CD4-positive, alpha-beta T cell (primary cell): ENCODE measurements at regions of chr3 and their contacts with region 1.

Region 1: DNA sequence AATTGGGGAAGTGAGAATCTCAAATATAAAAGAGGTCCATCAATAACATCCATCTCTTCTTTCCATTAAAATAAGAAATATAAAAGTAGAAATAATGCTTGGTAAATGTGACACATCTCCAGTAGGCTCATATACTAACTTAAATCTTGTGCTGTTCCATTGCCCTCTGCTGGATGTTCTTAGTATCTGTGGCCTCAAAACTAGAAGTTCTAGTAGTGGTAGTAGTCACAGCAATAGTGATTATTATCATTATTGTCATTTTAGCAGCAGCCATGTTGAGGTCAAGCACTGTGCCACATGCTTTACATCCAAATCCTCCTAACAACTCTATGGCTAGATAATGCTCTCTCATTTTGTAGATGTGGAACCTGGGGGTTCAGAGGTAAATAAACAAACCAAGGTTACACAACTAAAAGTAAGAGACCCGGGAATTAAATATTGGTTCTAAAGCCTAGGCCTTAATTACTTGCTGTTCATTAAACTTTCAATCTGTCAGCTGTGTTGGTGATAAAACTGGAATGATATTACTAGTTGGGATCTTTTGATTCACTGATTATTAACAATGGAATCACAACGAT is 20.2 kb upstream of the BTLA start:
- DNase-seq: peak in 5 of 14 experiments; percentile 26 to 81 (median 75)
- ATAC-seq: peak; percentile 97
- H3K4me3 ChIP-seq: no peak overlapping the region
- H3K4me3 Mint-ChIP-seq: no peak overlapping the region
- H3K27ac ChIP-seq: no peak overlapping the region
- H3K27ac Mint-ChIP-seq: no peak overlapping the region
- H3K4me1 ChIP-seq: no peaks in the 10 kb centered on the region
- H3K4me1 Mint-ChIP-seq: peaks cover 20% of the 10 kb centered on the region
- H3K27me3 ChIP-seq: no peaks in the 10 kb centered on the region
- H3K27me3 Mint-ChIP-seq: no peaks in the 10 kb centered on the region
- CTCF ChIP-seq: peak; percentile 74

Region 2: DNA sequence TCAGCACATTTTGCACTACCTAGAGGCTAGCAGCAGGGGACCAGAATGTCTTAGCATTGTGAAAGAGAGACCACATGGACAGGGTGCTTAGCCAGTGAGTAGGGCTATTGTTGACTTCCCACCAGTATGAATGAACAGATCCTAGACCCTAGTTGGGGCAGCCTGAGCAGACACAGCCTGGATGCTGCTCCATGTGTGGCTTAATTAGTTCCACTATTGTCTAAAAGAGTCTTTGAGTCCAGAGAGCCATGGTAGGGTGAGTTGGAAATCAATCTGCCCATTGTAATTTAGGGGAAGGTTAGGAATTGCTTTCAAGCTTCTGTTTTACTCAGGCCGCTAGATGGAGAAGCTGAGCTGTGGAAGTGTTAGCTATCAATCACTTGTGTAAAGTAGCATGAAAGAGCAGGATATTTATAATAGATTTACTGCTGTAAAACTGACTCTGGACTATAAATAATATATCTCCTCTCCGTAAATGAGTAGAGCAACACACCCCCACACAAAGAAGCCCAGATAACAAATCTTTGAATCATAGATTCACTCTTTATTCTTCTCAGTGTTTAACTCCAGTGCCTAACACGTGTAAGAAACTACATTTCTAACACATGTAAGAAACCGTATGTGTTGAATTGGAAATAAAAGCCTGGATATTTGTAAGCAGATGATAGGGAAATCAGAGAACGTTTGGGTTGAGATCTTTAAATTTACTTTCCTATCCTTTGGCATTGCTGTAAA is 382.4 kb before region 1 on chr3:
- CTCF ChIA-PET with region 1: interaction called, 6 read pairs
- POLR2A ChIA-PET with region 1: no interaction called
- intact Hi-C with region 1: loop called (anchors 2 kb)
- DNase-seq: peak in 11 of 14 experiments; percentile 19 to 75 (median 30)
- ATAC-seq: no peak
- H3K4me3 ChIP-seq: no peak overlapping the region
- H3K4me3 Mint-ChIP-seq: no peak overlapping the region
- H3K27ac ChIP-seq: no peak overlapping the region
- H3K27ac Mint-ChIP-seq: peak overlapping the region; percentile 27
- H3K4me1 ChIP-seq: peaks cover 36% of the 10 kb centered on the region
- H3K4me1 Mint-ChIP-seq: peaks cover 60% of the 10 kb centered on the region
- H3K27me3 ChIP-seq: no peaks in the 10 kb centered on the region
- H3K27me3 Mint-ChIP-seq: no peaks in the 10 kb centered on the region
- CTCF ChIP-seq: peak; percentile 68

Region 3: GRCh38 chr3:112327371-112327951 is 192.1 kb before region 1 on chr3:
- CTCF ChIA-PET with region 1: no interaction called
- POLR2A ChIA-PET with region 1: no interaction called
- intact Hi-C with region 1: loop called (anchors 1 kb)
- DNase-seq: peak in 8 of 14 experiments; percentile 17 to 81 (median 43)
- ATAC-seq: peak; percentile 100
- H3K4me3 ChIP-seq: no peak overlapping the region
- H3K4me3 Mint-ChIP-seq: no peak overlapping the region
- H3K27ac ChIP-seq: no peak overlapping the region
- H3K27ac Mint-ChIP-seq: no peak overlapping the region
- H3K4me1 ChIP-seq: peaks cover 2% of the 10 kb centered on the region
- H3K4me1 Mint-ChIP-seq: peaks cover 5% of the 10 kb centered on the region
- H3K27me3 ChIP-seq: no peaks in the 10 kb centered on the region
- H3K27me3 Mint-ChIP-seq: peaks cover 8% of the 10 kb centered on the region
- CTCF ChIP-seq: peak; percentile 77

Region 4: GRCh38 chr3:112498914-112499711 is 20.4 kb before region 1 on chr3 and contains the start of gene BTLA:
- CTCF ChIA-PET with region 1: no interaction called
- POLR2A ChIA-PET with region 1: interaction called, 4 read pairs
- intact Hi-C with region 1: loop called in 1 of 2 experiments (anchors 2 kb)
- DNase-seq: peak in 6 of 14 experiments; percentile 7 to 69 (median 59)
- ATAC-seq: peak; percentile 71
- H3K4me3 ChIP-seq: peak within 1 kb of the TSS; percentile 66
- H3K4me3 Mint-ChIP-seq: peak within 1 kb of the TSS; percentile 90
- H3K27ac ChIP-seq: peak within 1 kb of the TSS; percentile 57 to 60
- H3K27ac Mint-ChIP-seq: peak within 1 kb of the TSS; percentile 90
- H3K4me1 ChIP-seq: peaks cover 10% of the 10 kb centered on the region
- H3K4me1 Mint-ChIP-seq: peaks cover 69% of the 10 kb centered on the region
- H3K27me3 ChIP-seq: no peaks in the 10 kb centered on the region
- H3K27me3 Mint-ChIP-seq: no peaks in the 10 kb centered on the region
- CTCF ChIP-seq: no peak
- total RNA-seq, gene BTLA: 8.5 to 9.6 TPM

Region 5: DNA sequence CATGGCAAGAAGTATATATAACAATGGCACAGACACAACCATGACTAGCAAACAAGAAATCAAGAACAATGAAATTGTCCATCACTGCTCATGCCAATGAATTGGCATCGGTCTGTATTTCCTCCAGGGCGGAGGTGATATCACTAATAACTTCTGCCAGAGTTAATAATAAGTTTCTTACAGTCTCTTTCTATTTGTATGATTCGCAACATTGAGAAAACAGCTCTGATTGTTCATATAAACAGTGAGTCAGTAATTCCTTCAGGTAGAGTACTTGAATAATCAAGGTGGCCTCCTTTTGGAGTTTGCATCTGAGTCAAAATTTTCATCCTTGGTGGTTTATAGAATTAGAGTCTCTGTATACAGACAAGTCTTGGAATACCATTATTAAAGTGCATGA is 1003.7 kb after region 1 on chr3:
- CTCF ChIA-PET with region 1: no interaction called
- POLR2A ChIA-PET with region 1: no interaction called
- intact Hi-C with region 1: no loop called
- DNase-seq: no peak
- ATAC-seq: no peak
- H3K4me3 ChIP-seq: no peak overlapping the region
- H3K4me3 Mint-ChIP-seq: no peak overlapping the region
- H3K27ac ChIP-seq: no peak overlapping the region
- H3K27ac Mint-ChIP-seq: no peak overlapping the region
- H3K4me1 ChIP-seq: no peaks in the 10 kb centered on the region
- H3K4me1 Mint-ChIP-seq: peaks cover 4% of the 10 kb centered on the region
- H3K27me3 ChIP-seq: no peaks in the 10 kb centered on the region
- H3K27me3 Mint-ChIP-seq: peaks cover 20% of the 10 kb centered on the region
- CTCF ChIP-seq: no peak